Activated CD4-positive, alpha-beta memory T cell treated with anti-CD3 and anti-CD28 coated beads, Interleukin-2, amount 10 ng/mL, durations not matched to agents 7 days and 5 days (primary cell): ENCODE measurements at regions of chr15 and their contacts with region 1.

Region 1: DNA sequence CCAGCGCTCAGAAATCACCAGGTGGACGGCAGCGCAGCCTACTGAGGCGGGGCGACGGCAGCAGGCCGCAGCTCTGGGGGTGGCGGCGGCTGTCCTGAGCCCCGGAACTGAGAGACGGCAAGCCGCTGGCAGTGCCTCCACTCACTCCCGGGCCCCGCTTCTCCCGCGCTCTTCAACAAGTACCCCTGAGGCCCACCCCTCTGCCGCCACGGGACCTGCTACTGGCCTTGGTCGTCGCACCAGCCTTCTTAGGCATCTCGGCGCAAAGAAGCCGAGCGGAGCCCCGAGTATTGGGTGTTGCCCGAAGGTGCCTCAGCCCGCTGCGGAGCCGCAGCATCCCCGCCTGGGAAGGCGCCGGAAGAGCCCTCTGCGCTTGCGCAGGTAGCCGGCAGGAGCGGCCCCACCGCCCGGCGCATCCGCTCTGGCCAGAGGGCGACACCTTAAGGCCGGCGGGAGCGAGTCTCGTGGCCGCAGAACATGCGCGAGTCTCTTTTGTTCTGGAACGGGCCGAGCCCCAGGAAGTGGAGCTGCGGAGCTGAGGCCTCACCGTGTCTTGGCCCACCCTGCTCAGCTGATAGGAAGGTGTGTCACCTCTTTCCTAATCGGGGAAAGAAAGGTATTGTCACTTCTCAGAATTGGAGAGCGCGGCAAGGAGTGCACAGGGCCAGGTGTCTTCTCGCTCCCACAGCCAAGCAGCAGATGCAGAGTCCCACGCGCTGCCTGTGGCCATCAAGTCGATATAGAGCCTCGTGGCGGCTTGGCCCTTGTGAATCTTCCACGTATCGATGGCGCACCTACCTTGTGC is at the start of gene C15orf40:
- DNase-seq: peak; percentile 86
- H3K4me3 Mint-ChIP-seq: peak within 1 kb of the TSS; percentile 91
- H3K27ac Mint-ChIP-seq: peak within 1 kb of the TSS; percentile 91
- H3K4me1 Mint-ChIP-seq: peaks cover 51% of the 10 kb centered on the region
- H3K27me3 Mint-ChIP-seq: no peaks in the 10 kb centered on the region
- total RNA-seq, gene C15orf40: 23.8 to 25.5 TPM

Region 2: DNA sequence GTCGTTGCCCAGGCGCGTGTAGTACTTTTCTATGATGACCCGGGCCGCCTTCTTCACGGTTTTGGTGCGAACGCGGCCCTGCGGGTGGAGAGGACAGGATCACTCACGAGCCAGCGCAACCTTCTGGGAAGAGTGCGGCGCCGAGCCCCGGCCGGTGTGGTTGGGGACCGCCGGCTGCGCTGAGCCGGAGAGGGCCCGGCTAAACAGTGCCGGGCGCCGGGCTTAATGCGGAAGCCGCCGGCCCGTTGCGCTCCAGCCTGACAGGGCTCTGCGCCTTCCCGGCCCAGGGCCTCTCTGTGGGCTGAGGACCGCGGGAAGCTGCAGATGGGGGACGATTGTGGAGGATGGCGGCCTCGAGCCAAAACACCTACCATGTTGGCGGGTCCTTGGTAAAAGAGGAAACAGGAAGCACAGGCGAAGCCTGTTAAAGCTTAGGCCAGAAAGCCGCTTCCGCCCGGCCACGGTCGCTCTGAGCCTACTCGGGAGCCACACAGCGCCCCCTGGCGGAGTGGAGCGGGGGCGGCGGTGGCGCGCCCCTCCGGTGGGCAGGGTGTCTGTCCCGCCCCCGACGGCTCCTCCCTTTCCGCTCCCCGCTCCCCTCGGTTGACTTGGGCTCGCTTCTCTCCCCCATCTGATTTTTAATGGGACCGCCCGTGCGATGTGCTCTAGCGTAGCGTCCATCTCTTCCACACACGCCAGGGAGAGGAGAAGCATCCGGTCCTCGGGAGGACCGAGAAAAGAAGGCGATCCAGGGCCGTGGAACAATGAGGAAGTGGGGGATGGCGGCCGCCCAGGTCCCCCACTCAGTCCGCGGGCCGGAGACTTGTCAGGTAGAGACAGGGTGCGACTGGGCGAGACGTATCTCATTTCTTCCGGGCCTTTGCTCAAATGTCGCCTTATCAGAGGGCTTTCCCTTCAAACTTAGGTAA is 471.2 kb before region 1 on chr15 and contains the start of gene RPS17:
- CTCF ChIA-PET with region 1: interaction called, 16 read pairs
- POLR2A ChIA-PET with region 1: interaction called, 20 read pairs
- DNase-seq: peak; percentile 98
- H3K4me3 Mint-ChIP-seq: peak within 1 kb of the TSS; percentile 97
- H3K27ac Mint-ChIP-seq: peak within 1 kb of the TSS; percentile 95
- H3K4me1 Mint-ChIP-seq: peaks cover 47% of the 10 kb centered on the region
- H3K27me3 Mint-ChIP-seq: no peaks in the 10 kb centered on the region
- total RNA-seq, gene RPS17: 1,261 to 1,293 TPM

Region 3: GRCh38 chr15:82809404-82810060 is 201.9 kb before region 1 on chr15 and contains the start of gene WHAMM:
- CTCF ChIA-PET with region 1: interaction called, 6 read pairs
- POLR2A ChIA-PET with region 1: interaction called, 19 read pairs
- DNase-seq: peak; percentile 96
- H3K4me3 Mint-ChIP-seq: peak within 1 kb of the TSS; percentile 85
- H3K27ac Mint-ChIP-seq: peak within 1 kb of the TSS; percentile 86
- H3K4me1 Mint-ChIP-seq: peaks cover 31% of the 10 kb centered on the region
- H3K27me3 Mint-ChIP-seq: peaks cover 15% of the 10 kb centered on the region
- total RNA-seq, gene WHAMM: 11.1 to 13.7 TPM

Region 4: GRCh38 chr15:82832601-82833361 is 178.7 kb before region 1 on chr15:
- CTCF ChIA-PET with region 1: interaction called, 11 read pairs
- POLR2A ChIA-PET with region 1: interaction called, 4 read pairs
- DNase-seq: peak; percentile 46
- H3K4me3 Mint-ChIP-seq: no peak overlapping the region
- H3K27ac Mint-ChIP-seq: peak overlapping the region; percentile 71
- H3K4me1 Mint-ChIP-seq: peaks cover 44% of the 10 kb centered on the region
- H3K27me3 Mint-ChIP-seq: no peaks in the 10 kb centered on the region

Region 5: DNA sequence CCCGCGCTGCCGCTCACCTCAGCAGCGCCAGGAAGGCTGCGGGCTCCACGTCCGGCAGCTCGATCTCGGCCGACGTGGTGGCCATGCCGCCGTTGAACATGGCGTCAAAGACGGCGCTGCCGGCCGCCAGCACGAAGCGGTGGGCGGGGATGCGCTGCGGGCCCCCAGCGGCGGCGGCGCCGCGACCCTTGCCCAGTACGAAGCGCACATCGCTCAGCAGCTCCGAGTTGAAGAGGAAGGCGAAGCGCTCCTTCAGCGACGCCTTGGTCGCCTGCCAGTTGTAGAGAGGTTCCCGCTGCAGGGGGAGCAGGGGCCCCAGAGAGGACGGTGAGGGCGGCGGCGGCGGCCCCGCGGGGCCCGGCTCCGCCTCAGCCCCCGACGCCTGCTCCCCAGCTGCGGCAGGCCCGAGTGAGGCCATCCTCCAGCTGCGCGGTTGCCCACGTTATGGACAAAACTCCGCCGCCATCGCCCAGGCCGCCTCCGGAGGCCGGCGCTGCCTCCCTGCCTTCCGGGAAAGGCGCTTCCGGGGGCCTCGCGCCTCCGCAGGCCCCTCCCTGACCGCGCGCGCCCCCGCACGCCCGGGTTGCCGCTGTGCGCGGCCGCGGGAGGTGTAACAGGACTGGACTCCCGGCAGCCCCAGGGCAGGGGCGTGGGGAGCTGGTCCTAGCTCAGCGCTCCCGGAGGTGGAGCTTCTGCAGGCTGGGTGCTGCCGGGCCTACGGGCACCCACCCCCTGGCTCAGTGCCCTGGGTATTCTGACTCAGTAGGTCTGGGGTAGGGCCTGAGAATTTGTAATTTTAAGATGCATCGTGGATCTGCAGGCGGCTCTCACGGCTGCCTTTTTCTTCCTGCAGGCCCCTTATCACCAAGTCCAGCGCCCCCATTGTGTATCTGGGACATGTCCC is 55.5 kb after region 1 on chr15 and contains the start of gene BTBD1:
- CTCF ChIA-PET with region 1: interaction called, 19 read pairs
- POLR2A ChIA-PET with region 1: interaction called, 14 read pairs
- DNase-seq: peak; percentile 87
- H3K4me3 Mint-ChIP-seq: peak within 1 kb of the TSS; percentile 49
- H3K27ac Mint-ChIP-seq: peak within 1 kb of the TSS; percentile 76
- H3K4me1 Mint-ChIP-seq: peaks cover 20% of the 10 kb centered on the region
- H3K27me3 Mint-ChIP-seq: no peaks in the 10 kb centered on the region
- total RNA-seq, gene BTBD1: 55.0 to 58.6 TPM

Region 6: DNA sequence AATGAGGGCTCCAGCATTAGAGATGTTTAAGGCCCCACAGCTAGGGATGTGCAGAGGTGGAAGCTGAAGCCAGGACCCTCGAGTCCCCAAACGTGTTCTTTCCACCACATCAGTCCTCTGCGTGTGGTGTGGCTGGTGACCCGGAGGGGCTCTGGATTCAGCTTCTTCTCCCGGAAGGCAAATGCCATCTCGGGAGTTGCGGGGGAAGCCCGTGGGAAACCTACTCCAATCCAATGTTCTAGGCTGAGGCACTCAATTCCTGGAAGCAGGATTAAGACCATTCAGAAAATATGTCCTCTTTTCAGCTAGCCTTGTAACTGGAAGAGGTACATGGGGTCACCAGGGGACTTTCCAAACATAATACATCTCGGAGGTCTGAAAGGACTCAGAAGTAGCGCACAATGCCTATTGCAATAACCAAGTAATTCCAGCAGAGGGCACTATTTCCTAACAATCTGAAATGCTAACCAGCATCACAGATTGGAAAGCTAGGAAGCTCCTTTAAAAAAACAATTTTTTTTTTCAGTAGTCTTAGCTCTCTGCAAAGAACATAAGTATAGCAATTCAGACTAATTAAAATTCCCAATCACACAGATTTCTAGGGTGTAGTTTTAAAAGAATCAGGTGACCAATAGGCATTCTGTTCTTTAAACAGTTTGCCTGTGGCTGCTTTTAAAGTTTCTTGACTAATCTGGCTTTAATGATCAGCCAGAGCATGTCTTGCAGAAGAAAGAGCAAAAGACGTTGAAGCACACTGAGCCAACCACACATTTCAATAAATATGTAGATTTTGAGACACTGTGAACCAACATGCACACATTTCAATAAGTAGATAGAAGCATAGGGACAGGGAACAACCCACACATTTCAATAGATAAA is 236.9 kb after region 1 on chr15:
- CTCF ChIA-PET with region 1: interaction called, 15 read pairs
- POLR2A ChIA-PET with region 1: no interaction called
- DNase-seq: no peak
- H3K4me3 Mint-ChIP-seq: no peak overlapping the region
- H3K27ac Mint-ChIP-seq: no peak overlapping the region
- H3K4me1 Mint-ChIP-seq: no peaks in the 10 kb centered on the region
- H3K27me3 Mint-ChIP-seq: peaks cover 45% of the 10 kb centered on the region